Activated CD4-positive, alpha-beta memory T cell treated with anti-CD3 and anti-CD28 coated beads, Interleukin-2, amount 10 ng/mL, durations not matched to agents 7 days and 5 days (primary cell): ENCODE measurements at regions of chr14 and their contacts with region 1.

Region 1: GRCh38 chr14:64503478-64504309 is at the start of gene ZBTB25:
- DNase-seq: peak; percentile 97
- H3K4me3 Mint-ChIP-seq: peak within 1 kb of the TSS; percentile 94
- H3K27ac Mint-ChIP-seq: peak within 1 kb of the TSS; percentile 100
- H3K4me1 Mint-ChIP-seq: peaks cover 48% of the 10 kb centered on the region
- H3K27me3 Mint-ChIP-seq: no peaks in the 10 kb centered on the region
- total RNA-seq, gene ZBTB25: 38.8 to 40.5 TPM

Region 2: DNA sequence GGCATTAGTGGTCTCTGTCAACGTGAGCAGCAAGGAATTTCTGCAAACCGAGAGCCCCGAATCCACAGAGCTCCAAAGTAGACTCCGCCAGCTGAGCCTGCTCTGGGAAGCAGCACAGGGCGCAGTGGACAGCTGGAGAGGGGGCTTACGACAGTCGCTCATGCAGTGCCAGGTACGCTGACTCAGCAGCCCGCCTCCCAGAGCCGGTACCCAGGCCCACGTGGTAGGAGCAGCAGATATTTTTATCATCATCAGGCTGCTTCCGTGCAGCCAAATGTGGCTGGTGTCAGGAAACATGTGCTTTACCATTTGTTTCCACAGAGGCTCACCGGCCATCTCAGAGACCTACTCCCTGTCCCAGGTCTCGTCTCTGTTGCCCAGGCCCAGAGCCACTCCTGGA is 283.2 kb before region 1 on chr14:
- CTCF ChIA-PET with region 1: no interaction called
- POLR2A ChIA-PET with region 1: no interaction called
- DNase-seq: no peak
- H3K4me3 Mint-ChIP-seq: no peak overlapping the region
- H3K27ac Mint-ChIP-seq: no peak overlapping the region
- H3K4me1 Mint-ChIP-seq: peaks cover 3% of the 10 kb centered on the region
- H3K27me3 Mint-ChIP-seq: no peaks in the 10 kb centered on the region

Region 3: DNA sequence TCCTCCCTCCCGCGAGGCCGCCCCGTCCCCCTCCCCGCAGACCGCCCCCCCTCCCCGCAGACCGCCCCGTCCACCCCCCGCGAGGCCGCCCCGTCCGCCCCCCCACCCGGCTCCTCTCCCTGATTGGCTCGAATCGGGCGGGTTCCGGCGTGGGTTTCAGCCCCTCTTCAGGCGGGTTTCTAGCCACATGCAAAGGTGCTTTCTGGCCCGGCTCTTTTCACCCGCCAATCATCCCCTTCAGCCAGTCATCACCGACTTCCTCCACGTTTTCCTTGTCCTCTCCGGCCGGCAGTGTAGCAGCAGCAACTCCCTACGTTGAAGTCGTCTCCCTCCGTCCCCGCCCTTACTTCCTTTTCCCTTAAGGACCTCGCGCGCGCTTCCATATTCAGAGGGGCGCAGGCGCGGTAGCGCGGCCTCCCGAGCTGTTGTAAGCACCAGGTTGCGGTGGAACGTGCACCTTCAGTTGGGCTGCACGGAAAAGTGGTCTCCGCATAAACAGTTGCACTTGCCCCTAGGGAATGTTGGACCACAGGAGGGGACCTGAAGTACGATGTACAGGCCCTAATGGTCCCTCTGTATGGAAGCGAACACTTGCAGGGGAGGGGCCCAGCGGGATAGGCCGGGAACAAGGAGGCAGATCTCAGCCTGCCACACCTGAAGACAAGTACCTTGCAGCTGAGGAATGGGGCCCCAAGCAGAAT is 164.9 kb before region 1 on chr14:
- CTCF ChIA-PET with region 1: interaction called, 18 read pairs
- POLR2A ChIA-PET with region 1: interaction called, 28 read pairs
- DNase-seq: peak; percentile 91
- H3K4me3 Mint-ChIP-seq: peak overlapping the region; percentile 77
- H3K27ac Mint-ChIP-seq: peak overlapping the region; percentile 80
- H3K4me1 Mint-ChIP-seq: peaks cover 33% of the 10 kb centered on the region
- H3K27me3 Mint-ChIP-seq: no peaks in the 10 kb centered on the region

Region 4: DNA sequence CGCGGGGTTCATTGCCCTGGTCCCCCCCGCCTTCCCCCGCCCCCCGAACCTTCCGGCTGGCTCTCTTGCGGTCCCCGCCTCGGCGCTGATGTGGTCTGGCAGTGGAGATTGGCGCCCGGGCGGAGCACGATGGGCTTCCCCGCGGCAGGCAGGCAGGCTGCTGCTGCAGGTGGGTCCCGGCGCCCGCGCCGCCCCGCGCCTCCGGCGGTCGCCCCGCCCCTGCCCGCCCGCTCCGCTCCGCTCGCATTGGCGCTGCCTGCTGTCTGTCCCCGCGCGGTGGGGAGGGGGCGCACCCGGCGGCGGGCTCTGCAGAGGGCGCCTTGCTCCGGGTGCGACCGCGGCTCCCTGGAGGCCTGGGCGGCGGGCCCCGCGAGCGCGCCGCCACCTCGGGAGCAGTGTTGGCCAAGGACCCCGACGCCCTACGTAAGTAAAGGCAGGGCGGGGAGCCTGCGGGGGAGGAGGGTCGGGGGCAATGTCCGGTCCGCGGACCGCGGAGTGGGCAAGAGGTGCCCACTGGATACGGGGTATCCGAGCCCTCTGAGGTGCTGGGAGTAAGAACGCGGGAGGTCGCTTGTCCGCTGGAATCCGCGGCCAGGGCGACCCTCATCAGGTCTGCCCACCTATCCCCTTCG is 38.4 kb before region 1 on chr14 and contains the start of gene AKAP5:
- CTCF ChIA-PET with region 1: no interaction called
- POLR2A ChIA-PET with region 1: interaction called, 15 read pairs
- DNase-seq: peak; percentile 66
- H3K4me3 Mint-ChIP-seq: peak within 1 kb of the TSS; percentile 78
- H3K27ac Mint-ChIP-seq: no peak within 1 kb of the TSS
- H3K4me1 Mint-ChIP-seq: peaks cover 33% of the 10 kb centered on the region
- H3K27me3 Mint-ChIP-seq: peaks cover 4% of the 10 kb centered on the region
- total RNA-seq, gene AKAP5: 0.88 TPM

Region 5: DNA sequence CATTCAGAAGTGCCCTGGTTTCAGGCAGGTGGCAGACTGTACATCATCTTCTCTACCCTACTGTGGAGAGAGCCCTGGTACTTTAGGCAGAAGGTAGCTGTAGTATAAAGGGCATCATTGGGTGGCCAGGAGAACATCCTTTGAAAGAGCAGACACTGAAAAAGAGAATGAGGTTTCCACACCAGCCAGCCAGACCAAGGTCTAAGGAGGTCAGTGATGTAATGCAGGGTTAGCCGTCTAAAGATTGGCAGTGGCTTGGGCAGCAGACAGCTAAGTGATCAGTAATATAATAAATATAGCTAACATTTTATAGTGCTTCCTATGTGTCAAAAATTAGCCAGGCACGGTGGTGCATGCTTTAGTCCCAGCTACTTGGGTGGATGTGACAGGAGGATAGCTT is 12.1 kb before region 1 on chr14:
- CTCF ChIA-PET with region 1: interaction called, 4 read pairs
- POLR2A ChIA-PET with region 1: interaction called, 49 read pairs
- DNase-seq: no peak
- H3K4me3 Mint-ChIP-seq: no peak overlapping the region
- H3K27ac Mint-ChIP-seq: no peak overlapping the region
- H3K4me1 Mint-ChIP-seq: peaks cover 19% of the 10 kb centered on the region
- H3K27me3 Mint-ChIP-seq: no peaks in the 10 kb centered on the region

Region 6: GRCh38 chr14:64540208-64541157 is 36.8 kb after region 1 on chr14 and contains the start of gene HSPA2:
- CTCF ChIA-PET with region 1: interaction called, 8 read pairs
- POLR2A ChIA-PET with region 1: interaction called, 14 read pairs
- DNase-seq: peak; percentile 97
- H3K4me3 Mint-ChIP-seq: peak within 1 kb of the TSS; percentile 94
- H3K27ac Mint-ChIP-seq: peak within 1 kb of the TSS; percentile 91
- H3K4me1 Mint-ChIP-seq: peaks cover 36% of the 10 kb centered on the region
- H3K27me3 Mint-ChIP-seq: peaks cover 45% of the 10 kb centered on the region
- total RNA-seq, gene HSPA2: 6.8 to 7.1 TPM

Region 7: DNA sequence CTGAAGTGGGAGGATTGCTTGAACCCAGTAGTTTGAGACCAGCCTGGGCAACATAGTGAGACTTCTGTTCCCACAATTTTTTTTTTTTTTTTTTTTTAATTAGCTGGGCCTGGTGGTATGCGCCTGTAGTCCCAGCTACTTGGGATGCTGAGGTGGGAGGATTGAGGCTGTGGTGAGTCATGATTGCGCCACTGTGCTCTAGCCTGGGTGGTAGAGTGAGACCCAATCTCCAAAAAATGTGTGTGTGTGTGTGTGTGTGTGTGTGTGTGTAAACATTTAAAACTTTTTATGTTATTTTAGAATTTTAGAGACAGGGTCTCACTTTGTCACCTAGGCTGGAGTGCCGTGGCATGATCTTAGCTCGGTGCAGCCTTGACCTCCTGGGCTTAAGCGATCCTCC is 52.8 kb after region 1 on chr14:
- CTCF ChIA-PET with region 1: no interaction called
- POLR2A ChIA-PET with region 1: no interaction called
- DNase-seq: no peak
- H3K4me3 Mint-ChIP-seq: no peak overlapping the region
- H3K27ac Mint-ChIP-seq: no peak overlapping the region
- H3K4me1 Mint-ChIP-seq: peaks cover 10% of the 10 kb centered on the region
- H3K27me3 Mint-ChIP-seq: peaks cover 21% of the 10 kb centered on the region

Region 8: DNA sequence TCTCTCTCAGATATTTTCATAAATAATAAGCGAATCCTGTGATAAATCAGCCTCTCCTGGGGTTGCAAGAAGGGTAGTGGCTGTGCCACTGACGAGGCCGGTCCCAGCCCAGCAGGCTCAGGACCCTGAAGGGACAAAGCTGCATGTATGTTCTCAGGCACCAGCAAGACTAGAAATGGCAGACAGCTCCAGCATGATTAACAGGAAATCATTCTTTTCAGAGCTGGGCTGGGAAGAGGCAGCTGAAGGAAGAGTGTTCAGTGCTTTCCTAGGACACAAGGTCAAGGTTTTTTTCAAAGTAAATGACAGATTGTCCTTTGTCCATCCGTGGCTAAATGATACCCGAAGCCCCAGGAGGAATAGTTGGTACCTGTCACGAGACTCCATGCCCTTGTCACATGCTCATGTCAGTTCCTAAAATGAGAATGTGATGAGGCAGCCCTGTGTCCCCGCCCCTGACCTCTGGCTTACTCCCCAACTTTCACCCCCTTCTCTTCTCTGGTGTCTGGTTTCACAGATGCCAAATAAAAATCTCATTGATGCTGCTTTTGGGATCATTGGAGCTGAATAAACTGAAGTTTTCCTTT is 111.2 kb after region 1 on chr14:
- CTCF ChIA-PET with region 1: no interaction called
- POLR2A ChIA-PET with region 1: no interaction called
- DNase-seq: no peak
- H3K4me3 Mint-ChIP-seq: no peak overlapping the region
- H3K27ac Mint-ChIP-seq: no peak overlapping the region
- H3K4me1 Mint-ChIP-seq: no peaks in the 10 kb centered on the region
- H3K27me3 Mint-ChIP-seq: peaks cover 3% of the 10 kb centered on the region